ENCODE measurements at regions of chr10 and their contacts with region 1.

Region 1: GRCh38 chr10:48656241-48656913 is 28.3 kb upstream of the WDFY4 start:
- DNase-seq: peak; percentile 92
- CTCF ChIP-seq: peak; percentile 100

Region 2: GRCh38 chr10:48410503-48410902 is 245.9 kb before region 1 on chr10:
- CTCF ChIA-PET with region 1: no interaction called
- POLR2A ChIA-PET with region 1: no interaction called
- DNase-seq: no peak
- CTCF ChIP-seq: no peak

Region 3: GRCh38 chr10:48551861-48552591 is 104.4 kb before region 1 on chr10:
- CTCF ChIA-PET with region 1: interaction called, 336 read pairs
- POLR2A ChIA-PET with region 1: no interaction called
- DNase-seq: peak; percentile 75
- CTCF ChIP-seq: peak; percentile 57

Region 4: GRCh38 chr10:48608279-48608681 is 48.1 kb before region 1 on chr10:
- CTCF ChIA-PET with region 1: interaction called, 109 read pairs
- POLR2A ChIA-PET with region 1: interaction called, 4 read pairs
- DNase-seq: peak; percentile 79
- CTCF ChIP-seq: peak; percentile 85

Region 5: GRCh38 chr10:48684792-48685623 is 28.6 kb after region 1 on chr10 and contains the start of gene WDFY4:
- CTCF ChIA-PET with region 1: interaction called, 394 read pairs
- POLR2A ChIA-PET with region 1: no interaction called
- DNase-seq: peak; percentile 83
- CTCF ChIP-seq: no peak

Region 6: GRCh38 chr10:48742891-48743860 is 86.8 kb after region 1 on chr10:
- CTCF ChIA-PET with region 1: interaction called, 25 read pairs
- POLR2A ChIA-PET with region 1: no interaction called
- DNase-seq: peak; percentile 34
- CTCF ChIP-seq: no peak

Region 7: DNA sequence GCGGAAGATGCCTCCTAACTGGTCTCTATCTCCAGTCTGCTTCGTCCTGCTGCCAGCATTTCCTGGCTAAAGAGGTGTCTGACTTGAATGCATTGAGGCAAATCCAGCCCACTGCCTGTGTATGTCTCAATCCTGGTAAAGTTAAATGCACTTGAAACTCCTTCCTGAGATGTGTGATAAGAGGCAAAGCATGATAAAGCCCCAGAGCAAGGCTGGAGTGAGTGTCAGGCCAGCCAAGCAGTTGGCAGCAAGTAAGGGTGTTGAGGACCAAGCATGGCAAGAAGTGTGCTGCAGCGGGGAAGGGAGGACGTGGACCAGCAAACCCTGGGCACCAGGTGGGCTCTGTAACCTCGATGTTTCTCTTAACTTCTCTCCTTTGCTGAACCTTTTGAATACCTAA is 254.2 kb after region 1 on chr10:
- CTCF ChIA-PET with region 1: interaction called, 11 read pairs
- POLR2A ChIA-PET with region 1: no interaction called
- DNase-seq: no peak
- CTCF ChIP-seq: no peak

Region 8: DNA sequence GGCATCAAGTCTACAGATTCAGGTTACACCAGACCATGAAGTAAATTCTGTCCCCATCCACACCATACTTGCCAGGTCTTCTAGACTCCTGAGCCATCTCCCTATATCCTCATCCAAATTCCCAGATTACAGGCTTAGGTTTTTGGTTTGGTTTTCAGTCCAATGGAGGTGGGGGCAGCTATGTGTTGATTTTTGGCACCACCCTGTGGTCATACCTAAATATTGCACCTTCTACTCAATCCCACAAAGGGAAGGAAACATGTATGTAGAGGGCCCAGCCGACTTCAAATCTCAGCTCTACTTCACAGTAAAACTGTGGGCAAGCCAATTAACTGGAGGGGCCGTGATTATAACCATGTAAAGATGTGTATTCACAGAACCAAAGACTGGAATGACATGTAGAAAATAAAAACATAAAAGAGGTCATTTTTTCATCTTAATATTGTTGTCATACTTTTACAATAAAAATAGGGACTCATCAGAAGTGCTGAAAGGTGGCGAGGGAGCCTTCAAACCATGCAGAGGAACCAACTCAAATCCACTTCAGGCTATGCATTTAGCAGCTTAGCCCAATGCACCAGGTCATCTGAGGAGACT is 862.7 kb after region 1 on chr10:
- CTCF ChIA-PET with region 1: interaction called, 46 read pairs
- POLR2A ChIA-PET with region 1: no interaction called
- DNase-seq: peak; percentile 42
- CTCF ChIP-seq: peak; percentile 49